Dendritic cell treated with granulocyte-macrophage colony-stimulating factor and Interleukin-4, amounts not matched to agents 40 ng/mL and 50 ng/mL, for 4 days (primary cell): ENCODE measurements at regions of chr5 and their contacts with region 1.

Region 1: DNA sequence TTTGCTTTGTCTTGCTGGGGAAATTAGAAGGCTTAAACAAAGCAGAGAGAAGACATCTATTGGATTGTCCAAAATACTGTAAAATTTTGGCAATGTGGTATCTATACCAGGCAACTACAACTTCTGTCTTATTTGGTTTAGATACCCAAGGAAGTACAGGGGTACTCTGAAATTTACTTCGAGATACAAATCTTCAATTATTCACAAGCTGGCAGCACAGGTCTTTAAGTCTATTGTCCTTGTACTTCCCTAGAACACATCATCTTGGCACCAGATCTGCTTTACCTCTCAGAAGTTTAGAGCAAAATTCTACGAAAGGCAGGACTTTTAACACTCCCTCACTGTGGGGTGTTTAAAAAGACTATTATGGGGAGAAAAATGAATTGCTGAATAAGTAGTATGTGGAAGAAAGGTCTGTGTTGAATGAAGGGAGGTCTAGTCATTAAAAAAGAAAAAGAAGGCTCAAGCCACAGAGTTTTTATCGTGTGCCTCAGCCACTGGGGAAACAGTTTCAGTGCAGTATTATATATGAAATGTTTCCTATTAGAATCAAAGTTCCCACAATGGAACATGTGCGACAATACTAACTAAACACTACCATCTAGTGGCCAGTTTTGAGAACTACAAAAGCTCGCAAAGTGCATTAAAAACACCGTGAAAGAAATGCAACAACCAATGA is 93.7 kb downstream of the PDE4D start:
- H3K4me3 Mint-ChIP-seq: no peak overlapping the region
- H3K27ac Mint-ChIP-seq: no peak overlapping the region
- H3K4me1 Mint-ChIP-seq: peaks cover 10% of the 10 kb centered on the region
- H3K27me3 Mint-ChIP-seq: no peaks in the 10 kb centered on the region

Region 2: DNA sequence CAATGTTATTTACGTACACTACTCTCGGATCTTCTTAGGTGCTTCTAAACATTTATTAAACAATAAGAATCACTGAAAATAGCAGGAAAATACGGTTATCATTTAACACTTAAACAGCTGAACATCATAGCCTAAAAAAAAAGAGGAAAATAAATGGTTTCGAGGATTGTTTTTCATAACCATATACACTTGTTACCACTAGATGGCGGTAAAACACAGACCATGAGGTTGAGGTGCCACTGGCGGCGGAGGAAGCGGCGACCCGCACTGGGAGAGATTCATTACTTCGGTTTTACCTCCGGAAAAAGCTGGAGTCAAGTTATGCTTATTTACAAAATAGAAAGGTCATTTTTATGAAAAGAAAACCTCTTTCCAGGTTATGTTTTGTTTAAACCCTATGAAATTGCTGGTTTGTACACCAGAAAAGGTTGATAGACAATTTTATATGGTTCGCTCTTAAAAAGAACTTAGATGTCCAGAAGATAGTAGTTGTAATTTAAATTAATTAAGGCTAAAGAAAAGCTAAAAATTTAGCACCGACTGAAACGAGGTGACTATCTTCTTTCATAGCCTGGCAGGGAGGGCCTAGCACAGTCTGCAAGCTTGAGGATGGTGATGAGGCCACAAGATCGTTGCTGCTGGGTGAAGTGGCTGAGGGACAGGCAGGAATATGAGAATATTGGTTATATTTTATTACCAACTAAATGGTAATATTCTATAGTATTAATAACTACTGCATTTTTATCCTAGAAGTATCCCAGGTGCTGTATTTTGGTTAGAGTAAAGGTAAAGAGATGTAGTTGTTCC is 611.2 kb before region 1 on chr5:
- intact Hi-C with region 1: loop called (anchors 2 kb)
- H3K4me3 Mint-ChIP-seq: peak overlapping the region; percentile 28
- H3K27ac Mint-ChIP-seq: no peak overlapping the region
- H3K4me1 Mint-ChIP-seq: no peaks in the 10 kb centered on the region
- H3K27me3 Mint-ChIP-seq: peaks cover 2% of the 10 kb centered on the region

Region 3: GRCh38 chr5:59390074-59390659 is 409.6 kb before region 1 on chr5:
- intact Hi-C with region 1: loop called (anchors 1 kb)
- H3K4me3 Mint-ChIP-seq: no peak overlapping the region
- H3K27ac Mint-ChIP-seq: no peak overlapping the region
- H3K4me1 Mint-ChIP-seq: no peaks in the 10 kb centered on the region
- H3K27me3 Mint-ChIP-seq: no peaks in the 10 kb centered on the region

Region 4: GRCh38 chr5:59506285-59506877 is 293.4 kb before region 1 on chr5:
- intact Hi-C with region 1: loop called (anchors 2 kb)
- H3K4me3 Mint-ChIP-seq: no peak overlapping the region
- H3K27ac Mint-ChIP-seq: no peak overlapping the region
- H3K4me1 Mint-ChIP-seq: no peaks in the 10 kb centered on the region
- H3K27me3 Mint-ChIP-seq: no peaks in the 10 kb centered on the region

Region 5: DNA sequence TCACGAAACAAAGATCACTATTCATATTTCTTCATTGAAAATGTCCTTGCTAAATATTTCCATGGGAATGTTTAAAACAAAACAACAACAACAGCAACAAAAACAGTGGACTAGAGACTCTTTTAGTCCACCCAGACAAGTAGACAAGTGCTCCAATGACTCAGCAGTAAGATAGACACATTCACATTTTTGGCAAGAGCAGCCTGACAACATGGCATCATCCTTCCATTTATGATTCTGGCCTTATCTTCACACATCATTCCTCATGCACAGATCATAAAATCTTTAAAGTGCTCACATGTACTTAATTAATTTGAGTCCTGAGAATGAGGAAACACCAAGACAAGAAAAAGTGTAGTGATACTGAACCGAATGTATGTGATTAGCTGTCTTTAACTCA is 226.4 kb after region 1 on chr5:
- intact Hi-C with region 1: no loop called
- H3K4me3 Mint-ChIP-seq: no peak overlapping the region
- H3K27ac Mint-ChIP-seq: no peak overlapping the region
- H3K4me1 Mint-ChIP-seq: no peaks in the 10 kb centered on the region
- H3K27me3 Mint-ChIP-seq: no peaks in the 10 kb centered on the region